ENCODE measurements at regions of chr2 and their contacts with region 1.

Region 1: DNA sequence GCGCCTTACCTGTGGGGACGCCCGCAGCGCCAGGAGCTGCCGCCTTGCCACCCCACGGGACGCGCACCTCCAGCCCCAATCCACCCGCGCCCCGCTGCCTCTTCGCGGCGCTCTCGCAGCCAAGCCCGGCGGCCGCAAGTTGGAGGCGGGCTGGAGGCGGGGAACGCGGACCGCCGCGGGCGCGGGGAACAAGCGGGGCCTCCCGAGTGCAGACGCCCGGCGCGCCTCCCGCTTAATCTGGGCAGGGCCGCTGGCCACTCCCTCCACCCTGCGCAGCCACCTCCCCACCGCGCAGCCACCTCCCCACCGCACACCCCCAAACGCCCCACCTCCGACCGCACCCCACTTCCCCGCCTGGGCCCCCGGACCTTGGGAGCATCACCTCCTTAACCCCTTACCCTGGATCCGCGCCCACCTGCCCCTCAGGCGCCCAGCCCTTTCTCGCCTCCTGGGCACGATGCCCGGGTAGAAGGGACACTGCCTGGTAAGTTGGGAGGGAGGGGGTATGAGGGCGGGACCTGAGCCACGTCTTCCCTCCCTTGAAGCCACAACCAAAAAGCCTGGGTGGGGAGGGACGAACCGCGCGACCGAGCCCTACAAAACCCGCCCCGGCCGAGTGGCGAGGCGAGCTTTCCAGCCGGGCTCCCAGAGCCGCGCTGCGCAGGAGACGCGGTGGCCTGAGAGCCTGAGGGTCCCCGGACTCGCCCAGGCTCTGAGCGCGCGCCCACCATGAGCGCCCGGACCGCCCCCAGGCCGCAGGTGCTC is at the starts of genes COL4A3 and COL4A4:
- DNase-seq: peak in 1 of 2 experiments; percentile 64
- H3K4me3 ChIP-seq: peak within 1 kb of the TSS; percentile 75
- H3K27ac ChIP-seq: no peak within 1 kb of the TSS
- H3K4me1 ChIP-seq: peaks cover 9% of the 10 kb centered on the region; the same call in 1 of the 2 replicates
- H3K27me3 ChIP-seq: no peaks in the 10 kb centered on the region
- CTCF ChIP-seq: no peak
- total RNA-seq, gene COL4A3: 2.2 and 3.5 TPM in 2 replicates
- total RNA-seq, gene COL4A4: 5.6 and 6.0 TPM in 2 replicates

Region 2: DNA sequence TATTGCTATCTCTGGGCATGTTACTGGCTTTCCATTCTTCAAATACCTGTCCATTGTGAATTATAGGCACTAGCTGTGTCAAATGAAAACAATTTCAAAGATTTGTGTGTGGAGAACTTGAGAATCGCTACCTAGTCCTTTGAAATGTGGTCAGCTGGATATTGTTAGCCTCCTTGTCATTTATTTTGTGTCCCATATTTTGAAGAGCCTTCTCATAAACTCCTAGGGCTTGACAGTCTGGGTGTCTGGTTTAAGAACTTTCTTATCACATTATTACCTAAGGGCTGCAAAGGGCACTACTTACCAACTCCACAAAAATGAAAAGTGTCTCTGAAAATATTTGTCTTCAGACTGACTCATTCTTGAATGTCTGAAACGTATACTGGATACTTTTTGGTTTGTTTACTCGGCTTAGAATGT is 50.5 kb after region 1 on chr2:
- CTCF ChIA-PET with region 1: no interaction called
- POLR2A ChIA-PET with region 1: no interaction called
- intact Hi-C with region 1: loop called (anchors 5 kb)
- DNase-seq: no peak
- H3K4me3 ChIP-seq: no peak overlapping the region
- H3K27ac ChIP-seq: no peak overlapping the region
- H3K4me1 ChIP-seq: peaks cover 9% of the 10 kb centered on the region; the same call in 1 of the 2 replicates
- H3K27me3 ChIP-seq: no peaks in the 10 kb centered on the region
- CTCF ChIP-seq: no peak

Measured in PC-9 (cell line).